Panc1 (cell line): ENCODE measurements at regions of chr9 and their contacts with region 1.

Region 1: GRCh38 chr9:37592108-37592951 is at the start of gene TOMM5:
- DNase-seq: peak; percentile 92
- ATAC-seq: peak; percentile 97
- H3K4me3 ChIP-seq: peak within 1 kb of the TSS; percentile 74 to 95
- H3K27ac ChIP-seq: peak within 1 kb of the TSS; percentile 94
- H3K4me1 ChIP-seq: peaks cover 26% of the 10 kb centered on the region
- H3K27me3 ChIP-seq: peaks cover 17% of the 10 kb centered on the region
- CTCF ChIP-seq: no peak
- total RNA-seq, gene TOMM5: 333 TPM

Region 2: GRCh38 chr9:37746848-37747753 is 154.8 kb after region 1 on chr9:
- CTCF ChIA-PET with region 1: no interaction called
- POLR2A ChIA-PET with region 1: no interaction called
- in situ Hi-C with region 1: no loop called
- intact Hi-C with region 1: loop called (anchors 5 kb)
- DNase-seq: peak; percentile 62
- ATAC-seq: peak; percentile 93
- H3K4me3 ChIP-seq: no peak overlapping the region
- H3K27ac ChIP-seq: no peak overlapping the region
- H3K4me1 ChIP-seq: peaks cover 5% of the 10 kb centered on the region; the same call in 1 of the 2 replicates
- H3K27me3 ChIP-seq: no peaks in the 10 kb centered on the region
- CTCF ChIP-seq: no peak

Region 3: DNA sequence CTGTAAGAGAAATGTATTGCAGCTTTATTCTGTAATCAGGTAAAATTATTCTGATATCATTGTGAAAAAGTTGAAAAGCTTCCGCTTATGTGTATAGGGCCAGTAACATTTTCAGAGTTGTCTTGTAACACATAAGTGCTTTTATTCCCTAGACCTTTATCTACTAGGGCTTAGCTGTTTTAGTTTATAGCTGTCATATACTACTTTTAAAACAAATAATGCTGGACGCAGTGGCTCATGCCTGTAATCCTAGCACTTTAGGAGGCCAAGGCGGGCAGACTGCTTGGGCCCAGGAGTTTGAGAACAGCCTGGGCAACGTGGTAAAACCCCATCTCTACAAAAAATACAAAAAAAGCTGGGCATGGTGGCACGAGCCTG is 278.5 kb after region 1 on chr9:
- CTCF ChIA-PET with region 1: no interaction called
- POLR2A ChIA-PET with region 1: interaction called, 12 read pairs
- in situ Hi-C with region 1: no loop called
- intact Hi-C with region 1: no loop called
- DNase-seq: no peak
- ATAC-seq: no peak
- H3K4me3 ChIP-seq: no peak overlapping the region
- H3K27ac ChIP-seq: no peak overlapping the region
- H3K4me1 ChIP-seq: no peaks in the 10 kb centered on the region
- H3K27me3 ChIP-seq: no peaks in the 10 kb centered on the region
- CTCF ChIP-seq: no peak